Breast epithelium (tissue), 4 donors: ENCODE measurements at regions of chr11 and their contacts with region 1.

Region 1: DNA sequence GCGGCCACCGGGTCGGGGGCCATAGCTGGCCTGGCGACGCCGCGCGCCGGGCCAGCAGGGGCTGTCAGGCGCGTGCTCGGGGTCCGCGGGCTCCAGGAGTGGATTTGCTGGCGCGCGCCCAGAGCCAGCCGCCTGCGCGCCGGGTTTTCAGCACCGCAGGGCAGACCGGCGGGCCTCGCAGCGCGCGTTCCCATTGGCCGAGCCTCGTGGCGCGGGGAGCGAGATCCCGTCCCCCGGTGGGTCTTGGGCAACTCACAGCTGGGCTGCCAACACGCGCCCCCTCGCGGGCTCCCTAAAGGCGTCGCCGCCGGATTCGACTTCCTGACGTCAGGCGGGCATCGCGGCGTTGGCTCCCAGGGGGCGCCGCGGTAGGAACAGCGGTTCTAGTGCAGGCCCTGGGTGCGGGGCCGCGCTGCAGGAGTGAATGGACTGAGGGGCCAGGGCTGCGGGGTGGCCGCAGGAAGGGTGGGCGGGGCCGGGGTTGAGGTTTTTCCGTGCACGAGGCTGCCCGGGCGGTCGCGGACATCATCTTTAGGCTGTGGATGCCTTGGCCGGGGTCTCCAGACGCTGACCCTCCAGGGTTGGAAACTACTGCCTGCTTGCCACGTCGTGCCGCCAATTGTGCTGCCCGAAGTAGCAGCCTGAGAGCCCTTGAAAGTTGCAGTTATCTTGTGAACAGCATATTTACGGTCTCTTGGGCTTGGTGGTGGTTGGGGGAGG is at the start of gene FADS1:
- DNase-seq: peak in 1 of 2 donors; percentile 39
- H3K4me3 ChIP-seq: peak within 1 kb of the TSS; percentile 67 to 92 (median 69)
- H3K27ac ChIP-seq: peak within 1 kb of the TSS; percentile 78 to 98
- H3K4me1 ChIP-seq: peaks cover 0 to 6% of the 10 kb centered on the region in 2 donors
- H3K27me3 ChIP-seq: no peaks in the 10 kb centered on the region
- CTCF ChIP-seq: peak in 1 of 3 donors; percentile 15
- POLR2A ChIP-seq: no peak
- total RNA-seq, gene FADS1: 8.8 to 112 (median 15.1) TPM

Region 2: DNA sequence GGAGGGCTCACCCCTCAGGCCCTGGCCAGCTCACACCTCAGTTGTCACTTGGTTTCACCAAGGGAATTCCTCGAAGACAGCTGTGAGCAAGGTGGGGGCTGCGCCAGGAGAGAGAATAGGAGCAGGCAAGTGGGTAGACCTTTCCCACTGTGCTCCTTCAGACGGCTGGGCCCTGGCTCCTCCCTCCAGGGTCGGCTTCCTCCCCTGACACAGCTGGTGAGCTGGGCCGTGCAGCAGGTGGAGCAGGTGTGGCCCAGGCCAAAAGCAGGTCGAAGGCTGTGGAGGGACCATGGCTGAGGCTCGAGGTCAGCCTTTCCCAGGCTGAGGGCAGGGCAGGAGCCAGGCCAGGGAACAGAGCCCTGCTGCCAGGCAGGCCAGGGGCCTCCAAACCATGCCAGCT is 76.9 kb before region 1 on chr11:
- intact Hi-C with region 1: loop called (anchors 2 kb)
- DNase-seq: no peak
- H3K4me3 ChIP-seq: no peak overlapping the region
- H3K27ac ChIP-seq: no peak overlapping the region
- H3K4me1 ChIP-seq: no peaks in the 10 kb centered on the region
- H3K27me3 ChIP-seq: no peaks in the 10 kb centered on the region
- CTCF ChIP-seq: no peak
- POLR2A ChIP-seq: no peak

Region 3: DNA sequence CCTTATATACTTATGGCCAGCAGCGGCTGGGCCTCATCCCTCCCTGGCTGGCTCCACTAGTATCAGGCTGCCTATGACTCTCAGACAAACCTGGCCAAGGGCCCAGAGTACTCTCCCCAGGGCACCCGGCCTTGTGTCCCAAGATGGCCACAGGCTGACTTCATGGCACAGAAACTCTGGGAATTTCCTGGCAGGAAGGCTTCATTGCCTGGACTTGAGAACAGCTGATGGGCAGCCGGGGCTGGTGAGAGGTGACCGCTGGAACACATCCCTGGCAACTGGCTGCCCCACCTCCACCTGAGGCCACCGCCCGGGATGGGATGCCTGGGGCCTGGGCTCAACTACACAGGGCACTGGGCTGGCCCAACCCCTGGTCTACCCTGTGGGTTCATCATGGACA is 71.1 kb after region 1 on chr11:
- intact Hi-C with region 1: loop called (anchors 10 kb)
- DNase-seq: peak; percentile 67 to 76
- H3K4me3 ChIP-seq: no peak overlapping the region
- H3K27ac ChIP-seq: peak overlapping the region; percentile 33 to 79
- H3K4me1 ChIP-seq: peaks cover 4 to 7% of the 10 kb centered on the region in 2 donors
- H3K27me3 ChIP-seq: no peaks in the 10 kb centered on the region
- CTCF ChIP-seq: no peak
- POLR2A ChIP-seq: no peak

Region 4: GRCh38 chr11:62678770-62679696 is 862.1 kb after region 1 on chr11 and contains the start of gene UBXN1:
- intact Hi-C with region 1: loop called (anchors 5 kb)
- DNase-seq: peak; percentile 86
- H3K4me3 ChIP-seq: peak within 1 kb of the TSS; percentile 85 to 98 (median 98)
- H3K27ac ChIP-seq: peak within 1 kb of the TSS; percentile 92 to 93
- H3K4me1 ChIP-seq: peaks cover 3 to 8% of the 10 kb centered on the region in 2 donors
- H3K27me3 ChIP-seq: no peaks in the 10 kb centered on the region
- CTCF ChIP-seq: no peak
- POLR2A ChIP-seq: peak; percentile 48
- total RNA-seq, gene UBXN1: 204 to 248 (median 239) TPM